ENCODE measurements at regions of chr1 and their contacts with region 1.

Region 1: DNA sequence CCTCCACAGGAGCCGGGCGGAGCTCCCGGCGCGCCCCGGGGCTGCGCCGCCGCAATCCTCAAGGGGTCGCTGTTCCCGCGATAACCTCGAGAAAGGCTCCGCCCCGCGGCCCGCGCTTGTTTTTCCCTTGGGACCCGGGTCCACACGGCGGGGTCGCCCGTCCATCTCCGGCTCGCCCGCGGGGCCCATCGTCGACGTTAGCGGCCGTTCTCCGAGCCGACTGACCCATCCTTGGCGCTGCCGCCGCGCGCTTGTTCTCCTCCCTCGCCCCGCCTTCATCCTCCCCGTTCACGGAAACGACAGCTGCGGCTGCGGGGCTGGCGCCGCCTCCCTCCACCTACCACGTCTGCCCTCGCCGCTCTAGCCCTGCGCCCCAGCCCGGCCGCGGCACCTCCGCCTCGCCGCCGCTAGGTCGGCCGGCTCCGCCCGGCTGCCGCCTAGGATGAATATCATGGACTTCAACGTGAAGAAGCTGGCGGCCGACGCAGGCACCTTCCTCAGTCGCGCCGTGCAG is at the start of gene SH3GLB1:
- DNase-seq: peak; percentile 79 to 94 (median 87)
- ATAC-seq: peak; percentile 91 to 93 (median 92)
- H3K4me3 ChIP-seq: peak within 1 kb of the TSS; percentile 93 to 99
- H3K4me3 Mint-ChIP-seq: peak within 1 kb of the TSS; percentile 90 to 98 (median 98)
- H3K27ac ChIP-seq: peak within 1 kb of the TSS; percentile 87
- H3K27ac Mint-ChIP-seq: peak within 1 kb of the TSS; percentile 96 to 97
- H3K4me1 ChIP-seq: peaks cover 4 to 17% of the 10 kb centered on the region in 2 experiments
- H3K4me1 Mint-ChIP-seq: peaks cover 48 to 65% (median 55%) of the 10 kb centered on the region in 3 donors
- H3K27me3 ChIP-seq: no peaks in the 10 kb centered on the region
- H3K27me3 Mint-ChIP-seq: no peaks in the 10 kb centered on the region
- total RNA-seq, gene SH3GLB1: 42.2 to 48.0 (median 45.8) TPM

Region 2: GRCh38 chr1:86380257-86380861 is 324.2 kb before region 1 on chr1:
- CTCF ChIA-PET with region 1: interaction called, 3 to 19 read pairs
- POLR2A ChIA-PET with region 1: no interaction called
- DNase-seq: peak in 2 of 35 experiments; percentile 13 to 81
- ATAC-seq: peak; percentile 27 to 65 (median 58)
- H3K4me3 ChIP-seq: no peak overlapping the region
- H3K4me3 Mint-ChIP-seq: no peak overlapping the region
- H3K27ac ChIP-seq: no peak overlapping the region
- H3K27ac Mint-ChIP-seq: no peak overlapping the region
- H3K4me1 ChIP-seq: peaks cover 0 to 6% of the 10 kb centered on the region in 2 experiments
- H3K4me1 Mint-ChIP-seq: peaks cover 0 to 19% (median 13%) of the 10 kb centered on the region in 3 donors
- H3K27me3 ChIP-seq: no peaks in the 10 kb centered on the region
- H3K27me3 Mint-ChIP-seq: no peaks in the 10 kb centered on the region

Region 3: GRCh38 chr1:86733340-86733739 is 28.8 kb after region 1 on chr1:
- CTCF ChIA-PET with region 1: interaction called, 7 to 21 read pairs
- POLR2A ChIA-PET with region 1: interaction called, 3 to 4 read pairs
- DNase-seq: no peak
- ATAC-seq: no peak
- H3K4me3 ChIP-seq: no peak overlapping the region
- H3K4me3 Mint-ChIP-seq: no peak overlapping the region
- H3K27ac ChIP-seq: no peak overlapping the region
- H3K27ac Mint-ChIP-seq: peak overlapping the region; percentile 1 to 45
- H3K4me1 ChIP-seq: no peaks in the 10 kb centered on the region
- H3K4me1 Mint-ChIP-seq: peaks cover 1 to 4% (median 3%) of the 10 kb centered on the region in 3 donors
- H3K27me3 ChIP-seq: no peaks in the 10 kb centered on the region
- H3K27me3 Mint-ChIP-seq: no peaks in the 10 kb centered on the region

Region 4: DNA sequence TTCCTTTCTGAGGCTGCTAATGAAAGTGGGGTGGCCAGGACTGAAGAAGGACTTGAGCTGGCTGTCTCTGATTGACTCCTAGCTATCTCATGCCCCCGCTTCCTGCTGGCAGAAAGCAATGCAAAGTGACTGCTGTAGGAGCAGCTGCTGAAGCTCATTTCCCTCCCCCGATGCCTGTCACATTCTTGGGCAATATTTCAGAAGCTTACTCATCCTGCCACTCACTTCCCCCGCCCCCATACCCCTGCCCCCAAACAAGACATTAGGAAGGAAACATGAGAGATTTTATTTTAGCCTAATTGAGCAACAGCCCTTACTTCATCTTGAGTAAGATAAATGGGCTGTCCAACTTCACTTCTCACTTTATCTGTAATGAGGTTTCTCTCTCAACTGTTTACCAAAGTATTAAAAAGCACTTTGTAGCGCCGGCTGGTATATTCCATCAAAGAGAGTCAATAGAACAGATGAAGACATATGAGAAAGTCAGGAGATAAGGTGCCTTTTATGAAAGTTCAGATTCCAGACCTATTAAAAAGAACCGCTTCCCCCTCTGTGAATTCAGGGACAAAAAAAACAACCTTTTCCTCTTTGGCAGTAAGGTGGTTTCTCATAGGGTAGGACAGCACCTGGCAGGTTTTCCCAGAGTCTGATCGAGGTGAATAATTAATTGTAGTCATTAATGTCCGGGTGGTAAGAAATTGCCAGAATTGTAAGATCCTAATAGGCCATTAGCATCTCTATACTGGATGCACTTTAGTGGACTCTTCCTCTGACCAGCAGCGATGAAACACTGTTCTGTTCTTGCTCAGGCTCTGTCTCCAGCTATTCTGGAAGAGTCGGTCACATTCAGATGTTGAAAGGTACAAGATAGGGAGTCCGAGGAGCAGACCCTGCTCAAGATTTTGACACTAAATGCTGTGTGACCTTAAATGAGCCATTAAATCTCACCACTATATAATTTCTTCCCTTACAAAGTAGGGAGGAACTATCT is 70.1 kb after region 1 on chr1:
- CTCF ChIA-PET with region 1: interaction called in 1 of 2 experiments, 11 read pairs
- POLR2A ChIA-PET with region 1: no interaction called
- DNase-seq: peak in 21 of 35 experiments; percentile 1 to 46 (median 14)
- ATAC-seq: peak; percentile 48 to 60 (median 58)
- H3K4me3 ChIP-seq: no peak overlapping the region
- H3K4me3 Mint-ChIP-seq: peak overlapping the region in 1 of 3 donors; percentile 5
- H3K27ac ChIP-seq: no peak overlapping the region
- H3K27ac Mint-ChIP-seq: no peak overlapping the region
- H3K4me1 ChIP-seq: peaks cover 2 to 4% of the 10 kb centered on the region in 2 experiments
- H3K4me1 Mint-ChIP-seq: peaks cover 9 to 14% (median 14%) of the 10 kb centered on the region in 3 donors
- H3K27me3 ChIP-seq: no peaks in the 10 kb centered on the region
- H3K27me3 Mint-ChIP-seq: no peaks in the 10 kb centered on the region

Region 5: GRCh38 chr1:87045761-87046304 is 341.3 kb after region 1 on chr1:
- CTCF ChIA-PET with region 1: interaction called, 4 to 15 read pairs
- POLR2A ChIA-PET with region 1: interaction called in 1 of 2 experiments, 3 read pairs
- DNase-seq: peak in 33 of 35 experiments; percentile 15 to 82 (median 62)
- ATAC-seq: peak; percentile 52 to 76 (median 62)
- H3K4me3 ChIP-seq: no peak overlapping the region
- H3K4me3 Mint-ChIP-seq: peak overlapping the region in 1 of 3 donors; percentile 70
- H3K27ac ChIP-seq: no peak overlapping the region
- H3K27ac Mint-ChIP-seq: peak overlapping the region; percentile 19 to 66
- H3K4me1 ChIP-seq: peaks cover 10 to 25% of the 10 kb centered on the region in 2 experiments
- H3K4me1 Mint-ChIP-seq: peaks cover 48 to 52% (median 52%) of the 10 kb centered on the region in 3 donors
- H3K27me3 ChIP-seq: no peaks in the 10 kb centered on the region
- H3K27me3 Mint-ChIP-seq: no peaks in the 10 kb centered on the region

Measured in T-cell (primary cell).